Activated naive CD4-positive, alpha-beta T cell treated with anti-CD3 and anti-CD28 coated beads for 36 hours (primary cell): ENCODE measurements at regions of chr6 and their contacts with region 1.

Region 1: DNA sequence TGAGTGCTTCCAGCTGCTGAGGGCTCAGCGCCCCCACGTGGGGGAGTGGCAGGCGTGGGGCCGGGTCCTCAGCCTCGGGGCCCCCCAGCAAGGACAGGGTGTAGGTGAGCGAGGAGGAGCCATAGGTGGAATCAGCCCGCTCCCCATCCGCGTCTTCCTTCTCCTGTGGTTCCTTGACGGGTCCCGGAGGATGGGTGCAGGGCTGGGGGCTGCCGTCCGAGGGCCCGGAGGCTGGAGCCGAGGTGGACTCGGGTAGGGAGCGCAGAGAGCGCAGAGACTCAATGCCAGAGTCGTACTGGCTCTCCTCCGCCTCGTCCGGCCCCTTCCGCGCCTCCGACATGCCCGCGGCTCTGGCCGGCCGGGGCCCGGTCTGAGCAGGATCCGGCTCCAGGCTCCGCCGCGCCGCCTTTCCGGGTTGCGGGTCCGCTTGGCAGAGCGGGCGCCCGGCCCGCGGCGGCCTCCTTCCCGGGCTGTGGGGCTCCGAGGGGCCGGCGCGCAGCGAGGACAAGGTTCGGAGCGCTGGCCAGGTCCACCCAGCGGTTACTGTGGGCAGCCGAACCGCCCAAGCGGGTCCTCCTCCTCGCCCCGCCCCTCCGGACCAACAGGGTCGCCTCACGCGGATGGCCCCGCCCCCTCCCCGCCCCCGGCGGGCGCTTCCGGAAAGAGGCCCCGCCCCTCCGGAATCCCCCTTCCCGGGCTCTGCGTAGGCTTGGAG is at the start of gene NFKBIE:
- DNase-seq: peak; percentile 97
- H3K4me3 Mint-ChIP-seq: peak within 1 kb of the TSS; percentile 96
- H3K27ac Mint-ChIP-seq: peak within 1 kb of the TSS; percentile 95
- H3K4me1 Mint-ChIP-seq: peaks cover 55% of the 10 kb centered on the region
- H3K27me3 Mint-ChIP-seq: peaks cover 17% of the 10 kb centered on the region
- total RNA-seq, gene NFKBIE: 9.1 to 9.6 TPM

Region 2: GRCh38 chr6:44096612-44097011 is 168.6 kb before region 1 on chr6:
- CTCF ChIA-PET with region 1: interaction called, 4 read pairs
- intact Hi-C with region 1: loop called (anchors 1 kb)
- DNase-seq: peak; percentile 89
- H3K4me3 Mint-ChIP-seq: no peak overlapping the region
- H3K27ac Mint-ChIP-seq: no peak overlapping the region
- H3K4me1 Mint-ChIP-seq: no peaks in the 10 kb centered on the region
- H3K27me3 Mint-ChIP-seq: no peaks in the 10 kb centered on the region

Region 3: DNA sequence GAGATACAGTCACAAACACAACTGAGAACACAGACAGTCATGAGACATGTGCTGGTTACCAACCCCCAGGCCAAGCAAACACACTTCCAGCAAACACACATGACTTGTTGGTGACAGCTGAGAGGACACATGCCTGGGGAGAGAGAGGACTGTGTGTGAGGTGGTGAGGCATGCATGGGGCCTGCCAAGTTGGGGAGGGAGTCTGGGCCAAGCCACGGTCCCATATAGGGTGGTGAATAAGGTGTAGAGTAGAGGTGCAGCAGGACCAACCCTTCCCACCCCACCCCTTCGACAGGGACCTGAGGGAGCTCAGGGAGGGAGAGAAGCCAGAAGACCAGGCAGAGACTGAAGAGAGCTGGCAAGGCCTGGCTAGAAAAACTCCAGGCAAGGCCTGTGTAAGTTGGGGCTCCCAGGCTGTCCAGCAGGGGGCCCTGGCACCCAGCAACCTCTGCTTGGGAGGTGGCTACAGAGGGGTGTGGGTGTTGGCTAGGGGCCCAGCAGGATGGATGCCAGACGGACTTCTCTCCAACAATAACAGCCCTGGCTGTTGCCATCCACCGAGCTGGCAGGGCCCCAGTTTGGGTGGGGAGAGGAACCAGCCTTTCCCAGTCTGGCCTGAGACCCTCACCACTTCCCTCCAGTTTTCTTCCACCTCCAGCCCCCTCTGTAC is 43.7 kb before region 1 on chr6:
- CTCF ChIA-PET with region 1: no interaction called
- intact Hi-C with region 1: loop called (anchors 1 kb)
- DNase-seq: peak; percentile 86
- H3K4me3 Mint-ChIP-seq: no peak overlapping the region
- H3K27ac Mint-ChIP-seq: peak overlapping the region; percentile 21
- H3K4me1 Mint-ChIP-seq: peaks cover 49% of the 10 kb centered on the region
- H3K27me3 Mint-ChIP-seq: peaks cover 2% of the 10 kb centered on the region

Region 4: GRCh38 chr6:44286747-44287146 is 21.6 kb after region 1 on chr6:
- CTCF ChIA-PET with region 1: interaction called, 12 read pairs
- intact Hi-C with region 1: no loop called
- DNase-seq: no peak
- H3K4me3 Mint-ChIP-seq: no peak overlapping the region
- H3K27ac Mint-ChIP-seq: no peak overlapping the region
- H3K4me1 Mint-ChIP-seq: no peaks in the 10 kb centered on the region
- H3K27me3 Mint-ChIP-seq: peaks cover 51% of the 10 kb centered on the region

Region 5: GRCh38 chr6:44312901-44313788 is 48.0 kb after region 1 on chr6 and contains the start of gene AARS2:
- CTCF ChIA-PET with region 1: interaction called, 41 read pairs
- intact Hi-C with region 1: loop called (anchors 1 kb)
- DNase-seq: peak; percentile 95
- H3K4me3 Mint-ChIP-seq: peak within 1 kb of the TSS; percentile 96
- H3K27ac Mint-ChIP-seq: peak within 1 kb of the TSS; percentile 79
- H3K4me1 Mint-ChIP-seq: peaks cover 17% of the 10 kb centered on the region
- H3K27me3 Mint-ChIP-seq: no peaks in the 10 kb centered on the region
- total RNA-seq, gene AARS2: 11.6 to 12.9 TPM

Region 6: DNA sequence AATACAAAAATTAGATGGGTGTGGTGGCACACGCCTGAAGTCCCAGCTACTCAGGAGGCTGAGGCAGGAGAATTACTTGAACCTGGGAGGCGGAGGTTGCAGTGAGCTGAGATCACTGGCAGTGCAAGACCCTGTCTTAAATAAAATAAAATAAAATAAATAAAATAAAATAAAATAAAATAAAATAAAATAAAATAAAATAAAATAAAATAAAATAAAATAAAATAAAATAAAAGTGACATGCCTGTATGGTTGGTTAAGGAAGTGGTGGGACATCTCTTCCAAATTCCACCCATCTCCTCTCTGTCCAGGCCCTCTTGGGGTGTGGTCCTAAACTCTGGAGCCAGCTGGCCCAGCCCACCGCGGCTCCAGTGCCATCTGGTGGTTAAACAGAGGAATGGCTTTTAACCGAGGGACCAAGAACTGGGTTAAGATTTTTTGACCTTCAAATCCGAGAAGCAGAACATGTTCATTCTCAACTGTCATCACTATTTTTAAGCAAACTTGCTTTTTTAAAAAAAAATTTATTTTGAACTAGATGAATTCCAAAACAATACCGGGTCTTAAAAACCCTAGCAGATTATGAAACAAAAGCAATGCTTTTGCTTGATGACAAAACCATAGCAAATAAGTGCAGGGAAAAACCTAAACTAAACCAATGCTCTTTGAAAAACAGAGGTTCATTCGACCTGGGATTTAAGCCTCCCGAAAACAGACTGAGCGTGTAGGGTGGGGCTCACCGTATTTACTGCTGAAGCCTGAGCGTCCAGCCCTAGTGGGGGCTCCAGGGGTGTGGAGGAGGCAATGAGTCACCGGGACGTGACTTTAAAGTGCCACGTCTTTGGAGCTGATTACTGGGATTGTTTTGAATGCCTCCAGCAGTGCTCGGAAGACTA is 191.2 kb after region 1 on chr6:
- CTCF ChIA-PET with region 1: interaction called, 12 read pairs
- intact Hi-C with region 1: loop called (anchors 1 kb)
- DNase-seq: peak; percentile 56
- H3K4me3 Mint-ChIP-seq: no peak overlapping the region
- H3K27ac Mint-ChIP-seq: no peak overlapping the region
- H3K4me1 Mint-ChIP-seq: no peaks in the 10 kb centered on the region
- H3K27me3 Mint-ChIP-seq: peaks cover 3% of the 10 kb centered on the region

Region 7: GRCh38 chr6:44642870-44643529 is 377.8 kb after region 1 on chr6:
- CTCF ChIA-PET with region 1: no interaction called
- intact Hi-C with region 1: no loop called
- DNase-seq: peak; percentile 71
- H3K4me3 Mint-ChIP-seq: no peak overlapping the region
- H3K27ac Mint-ChIP-seq: peak overlapping the region; percentile 73
- H3K4me1 Mint-ChIP-seq: peaks cover 14% of the 10 kb centered on the region
- H3K27me3 Mint-ChIP-seq: no peaks in the 10 kb centered on the region